Activated B cell treated with CpG ODN at 0.5 μM for 24 hours (primary cell): ENCODE measurements at regions of chr22 and their contacts with region 1.

Region 1: GRCh38 chr22:20156611-20157429 is 6.0 kb upstream of the CCDC188 start:
- DNase-seq: peak; percentile 88
- ATAC-seq: peak; percentile 96
- H3K4me3 Mint-ChIP-seq: no peak overlapping the region
- H3K27ac Mint-ChIP-seq: no peak overlapping the region
- H3K4me1 Mint-ChIP-seq: no peaks in the 10 kb centered on the region
- H3K27me3 Mint-ChIP-seq: peaks cover 16% of the 10 kb centered on the region
- CTCF ChIP-seq: peak; percentile 75

Region 2: DNA sequence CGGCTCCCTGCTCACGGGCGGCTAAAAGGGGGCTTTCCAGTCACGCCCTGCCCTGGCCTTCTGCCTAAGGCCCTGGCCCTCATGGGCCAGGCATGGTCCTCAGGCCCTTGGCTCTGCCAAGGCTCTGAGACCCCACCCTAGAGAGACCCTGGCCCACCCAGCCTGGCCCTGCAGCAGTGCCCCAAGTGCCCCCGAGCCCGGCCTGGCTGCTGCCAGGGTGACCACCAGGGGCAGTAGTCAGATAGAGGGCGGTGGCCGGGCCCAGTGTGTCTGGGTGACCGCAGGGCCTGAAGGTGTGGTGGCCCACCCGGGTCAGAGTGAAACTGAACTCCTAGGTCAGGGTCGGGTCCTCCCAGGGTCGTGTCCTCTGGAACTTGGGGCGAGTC is 23.4 kb after region 1 on chr22:
- CTCF ChIA-PET with region 1: no interaction called
- POLR2A ChIA-PET with region 1: no interaction called
- intact Hi-C with region 1: no loop called
- DNase-seq: no peak
- ATAC-seq: no peak
- H3K4me3 Mint-ChIP-seq: no peak overlapping the region
- H3K27ac Mint-ChIP-seq: no peak overlapping the region
- H3K4me1 Mint-ChIP-seq: no peaks in the 10 kb centered on the region
- H3K27me3 Mint-ChIP-seq: no peaks in the 10 kb centered on the region
- CTCF ChIP-seq: no peak

Region 3: GRCh38 chr22:20238536-20238900 is 81.7 kb after region 1 on chr22:
- CTCF ChIA-PET with region 1: interaction called, 13 read pairs
- POLR2A ChIA-PET with region 1: no interaction called
- intact Hi-C with region 1: loop called (anchors 1 kb)
- DNase-seq: peak; percentile 39
- ATAC-seq: peak; percentile 85
- H3K4me3 Mint-ChIP-seq: no peak overlapping the region
- H3K27ac Mint-ChIP-seq: no peak overlapping the region
- H3K4me1 Mint-ChIP-seq: peaks cover 14% of the 10 kb centered on the region
- H3K27me3 Mint-ChIP-seq: no peaks in the 10 kb centered on the region
- CTCF ChIP-seq: no peak

Region 4: GRCh38 chr22:20268279-20269012 is 111.6 kb after region 1 on chr22 and contains the start of gene RTN4R:
- CTCF ChIA-PET with region 1: interaction called, 5 read pairs
- POLR2A ChIA-PET with region 1: no interaction called
- intact Hi-C with region 1: loop called (anchors 1 kb)
- DNase-seq: peak; percentile 64
- ATAC-seq: peak; percentile 95
- H3K4me3 Mint-ChIP-seq: peak within 1 kb of the TSS; percentile 65
- H3K27ac Mint-ChIP-seq: no peak within 1 kb of the TSS
- H3K4me1 Mint-ChIP-seq: peaks cover 7% of the 10 kb centered on the region
- H3K27me3 Mint-ChIP-seq: peaks cover 8% of the 10 kb centered on the region
- CTCF ChIP-seq: no peak
- total RNA-seq, gene RTN4R: 0.12 TPM in 1 of 2 replicates, not detected in the other

Region 5: DNA sequence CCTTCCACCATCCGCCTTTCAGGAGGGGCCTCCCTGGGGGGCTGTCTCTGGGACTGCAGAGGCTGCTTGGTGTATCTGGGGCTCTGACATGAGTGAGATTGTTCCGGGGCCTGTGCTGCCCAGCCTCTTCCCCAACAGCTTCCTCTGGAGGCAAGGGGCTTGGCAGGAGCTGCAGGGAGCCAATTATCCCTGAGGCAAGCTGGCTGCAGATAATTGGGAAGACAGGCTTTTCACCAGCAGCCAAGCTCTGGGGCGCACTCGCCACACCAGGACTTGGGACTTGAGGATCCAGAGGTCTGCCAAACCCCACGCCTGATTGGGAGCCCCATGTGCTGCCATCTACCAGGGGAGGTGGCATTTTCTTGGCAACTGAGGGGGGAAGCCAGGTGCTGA is 126.8 kb after region 1 on chr22:
- CTCF ChIA-PET with region 1: interaction called, 18 read pairs
- POLR2A ChIA-PET with region 1: no interaction called
- intact Hi-C with region 1: no loop called
- DNase-seq: no peak
- ATAC-seq: no peak
- H3K4me3 Mint-ChIP-seq: no peak overlapping the region
- H3K27ac Mint-ChIP-seq: no peak overlapping the region
- H3K4me1 Mint-ChIP-seq: peaks cover 9% of the 10 kb centered on the region
- H3K27me3 Mint-ChIP-seq: no peaks in the 10 kb centered on the region
- CTCF ChIP-seq: no peak

Region 6: DNA sequence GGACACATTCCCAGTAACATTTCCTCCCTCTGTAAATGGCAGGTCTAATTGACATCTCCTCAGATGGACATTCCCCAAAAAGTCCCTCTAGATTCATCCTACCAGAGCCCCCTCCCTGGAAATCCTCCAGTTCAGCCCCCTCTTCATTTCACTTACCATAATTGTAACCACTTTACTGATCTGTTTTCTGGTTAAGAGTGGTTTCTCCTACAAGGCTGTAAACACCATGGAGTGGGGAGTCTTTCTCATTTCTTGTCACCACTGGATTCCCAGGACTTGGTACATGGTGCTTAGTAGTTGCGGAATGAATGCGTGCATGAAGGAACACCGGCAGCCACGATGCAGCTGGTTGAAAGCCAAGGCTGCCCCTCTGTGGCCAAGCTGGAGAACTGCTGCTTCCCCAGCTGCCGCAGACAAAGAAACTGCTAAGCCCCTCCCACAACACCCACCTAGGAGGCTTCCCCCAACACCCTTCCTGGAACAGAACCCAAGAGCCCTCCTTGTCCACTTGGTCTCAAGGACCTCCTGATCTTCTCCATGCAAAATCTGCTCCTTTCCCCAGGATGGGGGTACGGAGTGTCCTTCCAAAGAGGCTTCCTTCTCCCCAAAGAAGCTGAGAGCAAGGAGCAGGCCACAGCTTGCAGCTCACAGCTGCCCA is 299.4 kb after region 1 on chr22:
- CTCF ChIA-PET with region 1: interaction called, 4 read pairs
- POLR2A ChIA-PET with region 1: no interaction called
- intact Hi-C with region 1: loop called (anchors 1 kb)
- DNase-seq: peak; percentile 60
- ATAC-seq: peak; percentile 100
- H3K4me3 Mint-ChIP-seq: no peak overlapping the region
- H3K27ac Mint-ChIP-seq: no peak overlapping the region
- H3K4me1 Mint-ChIP-seq: peaks cover 20% of the 10 kb centered on the region
- H3K27me3 Mint-ChIP-seq: no peaks in the 10 kb centered on the region
- CTCF ChIP-seq: no peak